CD4-positive, alpha-beta T cell (primary cell): ENCODE measurements at regions of chr10 and their contacts with region 1.

Region 1: DNA sequence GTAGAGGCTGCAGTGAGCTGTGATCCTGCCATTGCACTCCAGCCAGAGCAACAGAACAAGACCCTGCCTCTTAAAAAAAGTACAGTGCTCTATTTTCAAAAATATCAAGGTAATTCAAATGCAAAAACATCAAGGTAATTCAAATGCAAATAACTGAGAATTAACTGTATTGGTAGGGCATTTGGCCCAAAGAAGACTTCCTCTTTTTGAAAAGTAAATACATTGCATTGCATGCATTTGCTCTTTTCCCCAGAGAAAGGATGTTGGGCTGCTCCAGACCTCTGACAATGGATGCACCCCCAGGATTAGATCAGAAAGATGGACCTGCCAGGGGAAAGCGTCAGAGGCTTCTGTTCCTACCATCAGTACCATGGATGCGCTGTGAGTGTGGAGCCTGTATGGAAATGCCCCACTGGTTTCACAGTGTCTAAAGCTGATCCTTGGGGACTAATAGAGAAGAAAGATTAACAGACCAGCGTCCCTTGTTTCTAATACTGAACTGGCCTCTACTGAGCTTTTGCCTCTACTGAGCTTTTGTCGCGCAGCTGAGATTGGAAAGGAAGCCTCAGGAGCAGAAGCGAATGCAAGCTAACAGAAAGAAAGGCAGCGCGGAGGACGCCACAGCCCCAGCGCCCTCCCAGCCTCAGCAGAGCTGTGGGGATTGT is 93.5 kb upstream of the LYZL2 start:
- DNase-seq: no peak
- ATAC-seq: no peak
- H3K4me3 ChIP-seq: no peak overlapping the region
- H3K4me3 Mint-ChIP-seq: no peak overlapping the region
- H3K27ac ChIP-seq: no peak overlapping the region
- H3K27ac Mint-ChIP-seq: no peak overlapping the region
- H3K4me1 ChIP-seq: peaks cover 7% of the 10 kb centered on the region
- H3K4me1 Mint-ChIP-seq: peaks cover 5% of the 10 kb centered on the region
- H3K27me3 ChIP-seq: no peaks in the 10 kb centered on the region
- H3K27me3 Mint-ChIP-seq: peaks cover 4% of the 10 kb centered on the region
- CTCF ChIP-seq: no peak

Region 2: DNA sequence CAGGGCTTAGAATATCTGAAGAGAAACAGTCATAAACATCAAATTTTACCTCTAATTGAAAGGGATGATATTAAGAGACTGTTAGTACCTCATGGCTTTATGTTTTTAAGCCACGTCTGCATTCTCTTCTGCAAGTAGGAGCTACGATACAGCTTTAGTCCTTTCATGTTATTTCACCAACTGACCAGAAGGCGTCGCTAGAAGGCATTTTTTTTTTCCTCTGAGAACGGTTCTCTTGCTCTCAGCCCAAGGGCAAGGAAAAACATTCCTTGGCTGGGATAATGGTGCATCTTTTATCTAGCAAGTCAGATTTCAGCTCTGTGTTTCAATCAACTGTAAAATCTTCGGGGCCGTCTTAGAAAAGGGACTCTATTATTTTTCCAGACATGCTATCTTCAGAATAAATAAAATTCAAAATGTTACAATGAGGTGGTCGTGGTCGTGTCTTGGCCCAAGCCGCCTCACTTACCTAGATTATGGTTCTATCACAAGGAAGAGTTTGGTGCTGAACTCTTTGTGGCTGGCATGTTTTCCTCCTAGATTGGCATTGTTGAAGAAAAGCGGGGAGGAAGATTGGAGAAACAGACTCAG is 52.0 kb before region 1 on chr10:
- CTCF ChIA-PET with region 1: interaction called, 5 read pairs
- POLR2A ChIA-PET with region 1: no interaction called
- intact Hi-C with region 1: loop called in 1 of 2 experiments (anchors 1 kb)
- DNase-seq: peak in 4 of 14 experiments; percentile 49 to 79 (median 69)
- ATAC-seq: peak; percentile 75
- H3K4me3 ChIP-seq: peak overlapping the region; percentile 31
- H3K4me3 Mint-ChIP-seq: peak overlapping the region; percentile 65
- H3K27ac ChIP-seq: no peak overlapping the region
- H3K27ac Mint-ChIP-seq: no peak overlapping the region
- H3K4me1 ChIP-seq: no peaks in the 10 kb centered on the region
- H3K4me1 Mint-ChIP-seq: peaks cover 5% of the 10 kb centered on the region
- H3K27me3 ChIP-seq: peaks cover 0 to 13% of the 10 kb centered on the region in 2 experiments
- H3K27me3 Mint-ChIP-seq: peaks cover 22% of the 10 kb centered on the region
- CTCF ChIP-seq: peak; percentile 90

Region 3: DNA sequence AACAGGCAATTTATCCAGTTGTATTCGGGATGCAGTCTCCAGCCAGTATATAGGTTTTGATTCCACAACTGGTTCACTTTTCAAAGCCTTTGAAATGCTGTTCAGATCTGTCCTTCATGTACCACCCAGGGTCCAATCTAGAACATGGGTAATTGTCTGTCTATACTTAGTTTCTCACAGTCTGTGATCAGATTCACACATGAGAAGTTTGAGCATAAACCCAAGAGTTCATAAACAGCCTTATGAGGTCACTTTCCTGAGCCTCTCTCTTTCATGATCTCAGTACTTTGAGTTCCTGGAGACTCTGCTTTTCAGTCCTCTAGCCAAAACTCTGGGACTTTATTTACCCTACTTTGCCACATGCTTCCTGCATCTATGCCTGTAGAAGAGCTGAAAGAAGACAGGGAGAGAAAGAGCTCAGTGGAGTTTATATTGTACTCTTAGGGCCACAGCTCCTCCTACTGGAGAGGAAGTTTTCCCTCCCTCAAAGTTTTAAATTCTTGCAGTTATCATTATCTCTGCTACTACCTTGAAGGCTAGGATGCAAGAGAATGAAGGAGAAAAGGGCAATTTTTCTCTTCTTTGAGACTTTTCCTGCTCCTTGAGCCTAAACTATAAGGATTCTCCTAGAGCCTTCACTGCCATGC is 767.9 kb after region 1 on chr10:
- CTCF ChIA-PET with region 1: no interaction called
- POLR2A ChIA-PET with region 1: no interaction called
- intact Hi-C with region 1: loop called in 1 of 2 experiments (anchors 2 kb)
- DNase-seq: peak in 4 of 14 experiments; percentile 16 to 59 (median 52)
- ATAC-seq: peak; percentile 49
- H3K4me3 ChIP-seq: no peak overlapping the region
- H3K4me3 Mint-ChIP-seq: no peak overlapping the region
- H3K27ac ChIP-seq: no peak overlapping the region
- H3K27ac Mint-ChIP-seq: no peak overlapping the region
- H3K4me1 ChIP-seq: no peaks in the 10 kb centered on the region
- H3K4me1 Mint-ChIP-seq: peaks cover 12% of the 10 kb centered on the region
- H3K27me3 ChIP-seq: no peaks in the 10 kb centered on the region
- H3K27me3 Mint-ChIP-seq: no peaks in the 10 kb centered on the region
- CTCF ChIP-seq: peak; percentile 52

Region 4: GRCh38 chr10:31808258-31809218 is 1085.5 kb after region 1 on chr10:
- CTCF ChIA-PET with region 1: interaction called, 7 read pairs
- POLR2A ChIA-PET with region 1: no interaction called
- intact Hi-C with region 1: loop called (anchors 1 to 2 kb)
- DNase-seq: peak in 4 of 14 experiments; percentile 3 to 75 (median 70)
- ATAC-seq: peak; percentile 68
- H3K4me3 ChIP-seq: no peak overlapping the region
- H3K4me3 Mint-ChIP-seq: no peak overlapping the region
- H3K27ac ChIP-seq: no peak overlapping the region
- H3K27ac Mint-ChIP-seq: peak overlapping the region; percentile 50
- H3K4me1 ChIP-seq: peaks cover 3% of the 10 kb centered on the region
- H3K4me1 Mint-ChIP-seq: peaks cover 14% of the 10 kb centered on the region
- H3K27me3 ChIP-seq: no peaks in the 10 kb centered on the region
- H3K27me3 Mint-ChIP-seq: no peaks in the 10 kb centered on the region
- CTCF ChIP-seq: peak; percentile 73

Region 5: DNA sequence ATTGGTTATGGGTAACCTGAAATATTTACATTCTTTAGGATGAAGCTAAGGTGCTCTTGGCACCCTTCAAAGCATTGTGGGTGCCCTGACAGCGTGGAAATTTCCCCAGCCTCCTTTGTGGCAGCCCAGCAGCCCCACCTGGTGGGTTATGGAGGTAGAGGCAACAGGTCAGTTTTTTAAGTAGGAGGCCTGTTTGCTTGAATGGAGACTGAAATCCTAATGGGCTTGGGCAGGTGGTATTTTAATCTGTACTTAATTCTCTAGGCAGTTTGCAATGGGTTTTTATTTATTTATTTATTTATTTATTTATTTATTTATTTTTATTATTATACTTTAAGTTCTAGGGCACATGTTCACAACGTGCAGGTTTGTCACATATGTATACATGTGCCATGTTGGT is 1484.5 kb after region 1 on chr10:
- CTCF ChIA-PET with region 1: no interaction called
- POLR2A ChIA-PET with region 1: no interaction called
- intact Hi-C with region 1: loop called in 1 of 2 experiments (anchors 10 kb)
- DNase-seq: peak; percentile 27 to 75 (median 46)
- ATAC-seq: peak; percentile 86
- H3K4me3 ChIP-seq: no peak overlapping the region
- H3K4me3 Mint-ChIP-seq: no peak overlapping the region
- H3K27ac ChIP-seq: no peak overlapping the region
- H3K27ac Mint-ChIP-seq: no peak overlapping the region
- H3K4me1 ChIP-seq: peaks cover 7% of the 10 kb centered on the region
- H3K4me1 Mint-ChIP-seq: peaks cover 5% of the 10 kb centered on the region
- H3K27me3 ChIP-seq: no peaks in the 10 kb centered on the region
- H3K27me3 Mint-ChIP-seq: no peaks in the 10 kb centered on the region
- CTCF ChIP-seq: peak; percentile 68